Gastrocnemius medialis (tissue), 4 donors: ENCODE measurements at regions of chr6 and their contacts with region 1.

Region 1: DNA sequence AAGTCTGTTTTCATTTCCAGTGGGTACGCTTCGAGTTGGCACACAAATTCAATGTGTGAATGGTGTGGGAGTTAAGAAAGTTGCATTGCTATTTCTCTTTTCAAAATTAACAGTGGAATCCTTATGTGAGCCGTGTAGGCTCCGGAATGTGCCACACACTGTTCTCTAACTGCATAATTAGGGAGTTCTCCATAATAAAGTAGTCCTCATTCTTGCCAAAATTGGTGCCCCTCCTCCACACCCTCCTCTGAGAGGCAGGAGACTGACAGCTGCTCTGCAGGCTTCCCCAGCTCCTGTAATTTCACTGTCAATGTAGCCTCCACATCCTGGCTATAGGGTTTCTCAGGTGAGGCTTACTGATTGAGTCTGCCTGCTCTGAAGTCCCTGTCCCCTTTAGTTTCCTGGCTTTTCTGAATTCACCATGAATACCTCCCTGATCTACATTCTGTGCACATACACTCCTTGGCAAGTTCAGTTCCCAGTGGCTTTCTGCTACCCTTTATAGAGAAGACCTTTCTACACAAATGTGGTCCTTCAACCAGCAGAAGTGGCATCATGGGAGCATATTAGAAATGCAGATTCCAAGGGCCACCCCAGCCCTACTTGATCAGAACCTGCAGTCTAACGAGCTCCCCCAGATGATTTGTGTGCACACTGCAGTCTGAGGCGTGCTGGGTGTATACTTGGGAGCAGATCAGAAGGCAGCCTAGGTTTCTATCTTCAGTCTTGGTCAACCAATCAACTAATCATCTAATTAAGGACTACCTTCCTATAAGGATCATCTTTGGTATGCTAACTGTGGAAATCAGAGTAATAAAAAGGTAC is 19.9 kb upstream of the CCN6 start:
- DNase-seq: no peak
- ATAC-seq: no peak
- H3K4me3 ChIP-seq: no peak overlapping the region
- H3K27ac ChIP-seq: peak overlapping the region; percentile 42 to 57 (median 52)
- H3K4me1 ChIP-seq: peaks cover 10 to 17% of the 10 kb centered on the region in 2 donors
- H3K27me3 ChIP-seq: no peaks in the 10 kb centered on the region
- CTCF ChIP-seq: no peak
- POLR2A ChIP-seq: no peak

Region 2: DNA sequence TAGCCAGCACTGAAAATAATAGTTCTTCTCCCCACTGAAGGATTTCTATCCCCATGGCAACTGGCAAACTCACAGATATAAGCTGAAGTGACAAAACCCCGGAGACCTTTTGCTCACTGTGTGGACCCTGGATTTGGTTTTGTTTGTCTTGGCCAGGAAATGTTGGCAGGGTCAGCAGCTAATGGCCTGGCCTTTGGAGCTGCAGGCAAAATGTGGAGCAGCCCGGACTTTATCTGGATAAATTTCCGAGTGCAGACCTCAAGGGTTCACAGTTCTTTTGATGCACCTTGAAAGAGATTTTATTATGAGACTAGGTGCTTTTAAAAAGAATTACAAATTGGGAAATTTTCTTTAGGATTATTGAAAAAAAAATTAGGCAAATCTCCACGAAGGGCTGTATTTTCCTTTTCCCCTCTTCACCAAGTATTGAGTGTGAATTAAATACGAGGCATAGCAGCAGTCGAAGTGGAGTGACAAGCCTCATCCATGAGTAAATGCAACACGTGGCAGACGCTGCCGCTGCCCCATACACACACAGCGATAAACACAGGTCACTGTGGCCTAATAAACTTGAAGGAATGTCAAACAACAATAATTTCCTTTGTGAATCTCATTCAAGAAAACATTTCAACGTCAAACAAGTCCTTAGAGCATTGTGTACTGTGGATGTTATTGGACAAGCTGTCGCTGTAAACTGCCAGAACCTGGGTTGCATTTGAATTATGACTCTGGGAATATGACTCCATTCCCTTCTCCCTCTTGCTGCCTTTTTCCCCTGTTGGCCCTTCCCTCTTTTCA is 15.2 kb before region 1 on chr6:
- in situ Hi-C with region 1: no loop called
- intact Hi-C with region 1: loop called (anchors 2 kb)
- DNase-seq: peak in 1 of 2 donors; percentile 62
- ATAC-seq: peak; percentile 88 to 90
- H3K4me3 ChIP-seq: no peak overlapping the region
- H3K27ac ChIP-seq: peak overlapping the region; percentile 30 to 70 (median 65)
- H3K4me1 ChIP-seq: peaks cover 26 to 29% of the 10 kb centered on the region in 2 donors
- H3K27me3 ChIP-seq: no peaks in the 10 kb centered on the region
- CTCF ChIP-seq: no peak
- POLR2A ChIP-seq: no peak